OCI-LY7 (cell line): ENCODE measurements at regions of chr10 and their contacts with region 1.

Region 1: DNA sequence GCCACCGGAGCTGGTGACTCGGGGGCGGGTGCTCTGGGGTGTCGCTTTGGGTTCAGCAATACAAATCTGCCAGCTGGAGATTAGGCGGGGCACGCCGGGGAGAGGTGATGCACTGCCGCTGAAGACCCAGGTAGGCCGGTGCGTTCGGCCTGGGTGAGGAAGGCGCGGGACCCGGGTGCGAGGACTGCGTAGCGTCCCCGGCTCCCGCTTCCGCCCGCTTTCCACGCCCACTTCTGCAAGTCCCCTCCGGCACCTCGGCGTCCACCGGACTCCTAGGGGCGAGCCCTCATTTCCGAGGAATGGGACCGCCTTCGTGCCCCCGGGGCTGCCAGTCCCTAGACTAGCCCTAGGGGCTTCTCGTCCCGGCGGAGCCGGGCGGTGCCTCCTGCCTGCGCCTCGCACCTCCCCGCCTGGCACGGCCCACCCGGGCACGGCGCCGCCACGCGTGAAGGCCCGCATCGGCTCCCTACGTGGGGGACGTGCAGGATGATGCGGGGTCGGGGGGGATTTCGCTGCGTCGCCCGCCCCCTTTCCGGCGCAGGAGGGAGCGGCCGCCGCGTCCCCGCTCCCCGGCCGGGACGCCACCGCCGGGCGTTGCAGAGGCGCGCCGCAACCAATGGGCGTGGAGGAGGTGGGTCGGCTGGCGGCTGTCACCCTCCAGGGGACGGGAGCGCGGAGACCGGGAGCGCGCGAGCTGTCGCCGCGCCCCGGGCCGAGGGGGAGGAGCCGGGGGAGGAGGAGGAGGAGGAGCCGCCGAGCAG is 40.0 kb downstream of the HK1 start:
- DNase-seq: peak; percentile 90
- H3K4me3 ChIP-seq: peak overlapping the region; percentile 88
- H3K27ac ChIP-seq: peak overlapping the region; percentile 34
- H3K4me1 ChIP-seq: peaks cover 28% of the 10 kb centered on the region
- CTCF ChIP-seq: no peak

Region 2: DNA sequence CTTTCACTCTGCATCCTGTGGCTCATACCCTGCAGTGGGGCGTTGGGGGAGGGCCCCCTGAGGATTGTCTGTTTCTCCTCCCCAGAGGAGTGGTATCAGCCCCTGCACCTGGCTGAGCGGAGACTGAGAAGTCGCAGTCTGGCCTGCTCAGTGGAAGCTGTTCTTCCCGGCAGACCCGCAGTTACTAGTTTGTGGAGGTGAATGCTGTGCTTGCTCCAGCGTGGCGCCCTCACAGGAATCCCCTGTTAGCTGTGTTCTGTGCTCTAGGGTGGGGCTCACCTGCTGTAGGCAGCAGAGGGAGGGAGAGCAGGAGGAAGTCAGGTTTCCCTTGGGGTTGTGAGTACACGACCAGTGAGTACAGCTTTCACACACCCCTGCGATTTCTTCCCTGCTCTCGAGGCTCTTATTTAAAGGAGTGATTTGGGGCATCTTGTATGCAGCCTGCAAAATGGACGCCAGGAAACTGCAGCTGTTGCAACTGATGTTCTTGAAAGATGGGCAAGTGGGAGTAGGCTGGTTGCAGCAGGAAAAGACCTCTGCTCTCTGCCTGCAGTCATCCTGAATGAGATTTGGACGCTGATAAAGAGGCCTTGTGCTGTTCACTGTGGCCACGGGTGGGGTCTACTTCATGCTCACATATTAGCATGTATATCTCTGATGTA is 26.4 kb after region 1 on chr10:
- CTCF ChIA-PET with region 1: no interaction called
- POLR2A ChIA-PET with region 1: interaction called, 6 read pairs
- intact Hi-C with region 1: loop called (anchors 2 kb)
- DNase-seq: peak; percentile 73
- H3K4me3 ChIP-seq: peak overlapping the region; percentile 30
- H3K27ac ChIP-seq: peak overlapping the region; percentile 63
- H3K4me1 ChIP-seq: peaks cover 51% of the 10 kb centered on the region
- CTCF ChIP-seq: no peak; the same call in 1 of the 2 replicates